Activated CD8-positive, alpha-beta T cell treated with anti-CD3 and anti-CD28 coated beads, Interleukin-2, amount 10 ng/mL, durations not matched to agents 7 days and 5 days (primary cell): ENCODE measurements at regions of chr3 and their contacts with region 1.

Region 1: GRCh38 chr3:45210308-45211041 is 15.6 kb downstream of the TMEM158 start:
- DNase-seq: peak; percentile 88
- ATAC-seq: peak; percentile 92
- H3K4me3 Mint-ChIP-seq: no peak overlapping the region
- H3K27ac Mint-ChIP-seq: peak overlapping the region; percentile 0
- H3K4me1 Mint-ChIP-seq: peaks cover 39% of the 10 kb centered on the region
- H3K27me3 Mint-ChIP-seq: peaks cover 24% of the 10 kb centered on the region

Region 2: DNA sequence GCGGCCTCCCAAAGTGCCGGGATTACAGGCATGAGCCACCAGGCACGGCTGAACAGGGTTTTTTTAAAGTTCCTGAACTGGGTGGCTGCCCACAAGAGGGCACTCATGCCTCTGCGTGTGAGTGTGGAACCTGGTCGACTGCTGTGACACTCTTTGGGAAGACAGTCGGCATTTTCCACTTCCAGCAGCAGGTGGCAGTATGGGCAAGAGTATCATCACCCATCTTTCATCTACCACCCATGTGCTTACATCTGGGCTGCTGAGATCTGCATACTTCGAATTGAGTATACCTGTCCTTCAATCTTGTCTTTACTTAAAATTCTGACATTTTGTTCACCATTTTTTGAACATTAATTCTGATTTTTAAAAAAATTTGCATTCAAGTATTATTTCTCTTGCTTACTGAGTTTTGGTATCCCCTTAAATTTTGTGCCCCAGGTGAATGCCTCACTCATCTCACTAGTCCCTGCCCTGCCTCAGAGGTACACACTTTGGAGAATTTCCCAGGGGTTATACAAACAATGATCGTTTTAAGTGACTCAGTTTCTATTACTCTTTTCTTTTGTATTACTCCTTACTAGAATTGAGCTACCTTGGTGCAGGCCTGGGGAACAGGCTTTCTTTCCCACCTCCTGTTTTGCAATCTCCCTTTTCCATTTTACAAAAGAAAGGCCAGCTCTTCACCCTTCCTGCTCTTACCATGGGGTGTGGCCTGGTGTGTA is 172.6 kb before region 1 on chr3:
- CTCF ChIA-PET with region 1: interaction called, 386 read pairs
- POLR2A ChIA-PET with region 1: no interaction called
- DNase-seq: peak; percentile 96
- ATAC-seq: peak; percentile 82
- H3K4me3 Mint-ChIP-seq: no peak overlapping the region
- H3K27ac Mint-ChIP-seq: no peak overlapping the region
- H3K4me1 Mint-ChIP-seq: peaks cover 60% of the 10 kb centered on the region
- H3K27me3 Mint-ChIP-seq: peaks cover 7% of the 10 kb centered on the region

Region 3: GRCh38 chr3:45105855-45106671 is 104.4 kb before region 1 on chr3:
- CTCF ChIA-PET with region 1: interaction called, 11 read pairs
- POLR2A ChIA-PET with region 1: no interaction called
- DNase-seq: peak; percentile 91
- ATAC-seq: peak; percentile 85
- H3K4me3 Mint-ChIP-seq: peak overlapping the region; percentile 16
- H3K27ac Mint-ChIP-seq: peak overlapping the region; percentile 83
- H3K4me1 Mint-ChIP-seq: peaks cover 87% of the 10 kb centered on the region
- H3K27me3 Mint-ChIP-seq: peaks cover 8% of the 10 kb centered on the region

Region 4: GRCh38 chr3:45145681-45146614 is 64.5 kb before region 1 on chr3 and contains the start of gene CDCP1:
- CTCF ChIA-PET with region 1: interaction called, 17 read pairs
- POLR2A ChIA-PET with region 1: no interaction called
- DNase-seq: peak; percentile 36
- ATAC-seq: peak; percentile 79
- H3K4me3 Mint-ChIP-seq: peak within 1 kb of the TSS; percentile 85
- H3K27ac Mint-ChIP-seq: peak within 1 kb of the TSS; percentile 54
- H3K4me1 Mint-ChIP-seq: peaks cover 28% of the 10 kb centered on the region
- H3K27me3 Mint-ChIP-seq: peaks cover 62% of the 10 kb centered on the region
- total RNA-seq, gene CDCP1: 16.4 to 17.7 TPM

Region 5: DNA sequence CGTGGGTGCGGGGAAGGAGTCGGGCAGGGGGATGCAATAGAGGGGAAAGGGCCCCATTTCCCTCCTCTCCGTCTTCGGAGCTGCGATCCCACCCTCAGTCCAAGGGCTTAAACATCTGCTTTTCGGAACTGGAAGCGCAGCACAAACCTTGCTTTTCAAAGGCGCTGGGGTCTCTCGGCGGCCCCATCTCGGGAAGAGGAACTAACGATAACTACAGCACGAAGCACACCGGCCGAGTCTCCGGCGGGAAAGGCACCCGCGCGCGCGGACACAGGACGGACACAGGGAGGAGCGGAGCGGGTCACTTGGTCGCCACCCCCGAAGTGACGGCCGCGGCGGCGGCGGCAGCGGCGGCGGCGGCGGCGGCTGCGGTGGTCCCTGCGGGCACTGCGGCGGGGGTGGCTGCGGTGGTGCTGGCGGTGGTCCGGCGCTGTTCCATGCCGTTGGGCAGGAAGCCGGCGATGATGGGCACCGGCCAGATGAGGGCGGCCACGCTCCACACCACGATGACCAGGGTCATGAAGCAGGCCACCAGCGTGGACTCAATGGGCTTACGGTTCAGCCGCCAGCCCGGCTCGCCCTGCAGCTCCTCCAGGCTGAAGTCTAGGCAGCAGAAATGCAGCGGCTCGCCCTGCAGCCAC is 14.5 kb after region 1 on chr3:
- CTCF ChIA-PET with region 1: interaction called, 12 read pairs
- POLR2A ChIA-PET with region 1: no interaction called
- DNase-seq: peak; percentile 45
- ATAC-seq: peak; percentile 6
- H3K4me3 Mint-ChIP-seq: peak overlapping the region; percentile 68
- H3K27ac Mint-ChIP-seq: peak overlapping the region; percentile 69
- H3K4me1 Mint-ChIP-seq: peaks cover 11% of the 10 kb centered on the region
- H3K27me3 Mint-ChIP-seq: peaks cover 72% of the 10 kb centered on the region